ENCODE measurements at regions of chr3 and their contacts with region 1.

Region 1: DNA sequence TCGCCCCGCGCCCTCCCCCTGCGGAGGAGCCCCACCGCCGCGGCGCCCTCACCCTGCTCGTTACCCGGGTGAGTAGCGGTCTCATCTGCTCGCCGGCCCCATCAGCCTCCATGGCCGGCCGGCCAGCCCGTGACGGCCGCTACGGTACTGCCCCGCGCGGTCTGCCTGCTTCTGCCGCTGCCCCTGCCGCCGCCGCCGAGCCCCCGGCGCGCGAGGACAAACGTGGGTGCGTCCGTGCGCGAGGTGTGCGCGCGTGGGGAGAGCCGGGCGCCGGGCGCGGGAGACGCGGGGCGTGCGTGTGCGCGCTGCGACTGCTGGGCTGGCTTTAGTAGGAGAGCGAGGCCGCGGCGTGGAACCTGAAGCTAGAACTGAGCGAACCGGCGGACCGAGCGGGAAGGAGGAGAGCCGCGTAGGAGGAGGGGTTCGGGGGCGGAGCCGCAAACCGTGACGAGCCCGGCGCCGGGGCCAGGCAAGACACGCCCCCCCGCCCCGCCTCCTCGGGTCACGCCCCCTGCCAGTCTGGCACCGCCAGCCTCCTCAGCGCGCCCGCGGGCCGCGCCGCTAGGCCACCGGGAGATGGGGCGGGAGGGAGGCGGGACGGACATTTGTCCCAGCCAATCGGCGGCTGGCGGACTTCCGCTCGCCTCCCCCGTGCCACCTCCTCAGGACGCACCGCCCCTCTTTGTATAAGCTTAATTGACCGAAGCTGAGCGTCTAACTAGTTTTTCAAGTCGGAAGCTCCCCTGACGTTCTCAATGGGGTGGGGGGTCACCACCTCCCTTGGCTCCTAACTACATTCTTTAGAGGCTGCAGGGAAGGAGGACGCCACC is at the start of gene SLC4A7:
- DNase-seq: peak; percentile 95
- H3K4me3 ChIP-seq: peak within 1 kb of the TSS; percentile 81 to 94 (median 88)
- H3K4me3 Mint-ChIP-seq: peak within 1 kb of the TSS; percentile 99 to 100
- H3K27ac ChIP-seq: peak within 1 kb of the TSS; percentile 77 to 80
- H3K27ac Mint-ChIP-seq: peak within 1 kb of the TSS; percentile 79 to 96 (median 94)
- H3K4me1 ChIP-seq: peaks cover 17 to 21% of the 10 kb centered on the region in 2 donors
- H3K4me1 Mint-ChIP-seq: peaks cover 31% of the 10 kb centered on the region
- H3K27me3 ChIP-seq: no peaks in the 10 kb centered on the region
- H3K27me3 Mint-ChIP-seq: peaks cover 0 to 1% (median 0%) of the 10 kb centered on the region in 3 donors
- CTCF ChIP-seq: no peak
- polyA plus RNA-seq, gene SLC4A7: 5.4 to 7.6 (median 5.5) TPM

Region 2: GRCh38 chr3:27368831-27369607 is 115.2 kb before region 1 on chr3 and contains the start of gene NEK10:
- intact Hi-C with region 1: loop called (anchors 10 kb)
- DNase-seq: peak; percentile 83 to 88 (median 88)
- H3K4me3 ChIP-seq: peak within 1 kb of the TSS; percentile 34 to 84 (median 60)
- H3K4me3 Mint-ChIP-seq: peak within 1 kb of the TSS; percentile 85 to 95
- H3K27ac ChIP-seq: no peak within 1 kb of the TSS
- H3K27ac Mint-ChIP-seq: peak within 1 kb of the TSS in 4 of 7 donors; percentile 3 to 66 (median 14)
- H3K4me1 ChIP-seq: peaks cover 8 to 14% of the 10 kb centered on the region in 2 donors
- H3K4me1 Mint-ChIP-seq: peaks cover 14% of the 10 kb centered on the region
- H3K27me3 ChIP-seq: peaks cover 0 to 5% of the 10 kb centered on the region in 2 donors
- H3K27me3 Mint-ChIP-seq: peaks cover 7 to 15% (median 10%) of the 10 kb centered on the region in 3 donors
- CTCF ChIP-seq: no peak
- polyA plus RNA-seq, gene NEK10: not detected

Region 3: DNA sequence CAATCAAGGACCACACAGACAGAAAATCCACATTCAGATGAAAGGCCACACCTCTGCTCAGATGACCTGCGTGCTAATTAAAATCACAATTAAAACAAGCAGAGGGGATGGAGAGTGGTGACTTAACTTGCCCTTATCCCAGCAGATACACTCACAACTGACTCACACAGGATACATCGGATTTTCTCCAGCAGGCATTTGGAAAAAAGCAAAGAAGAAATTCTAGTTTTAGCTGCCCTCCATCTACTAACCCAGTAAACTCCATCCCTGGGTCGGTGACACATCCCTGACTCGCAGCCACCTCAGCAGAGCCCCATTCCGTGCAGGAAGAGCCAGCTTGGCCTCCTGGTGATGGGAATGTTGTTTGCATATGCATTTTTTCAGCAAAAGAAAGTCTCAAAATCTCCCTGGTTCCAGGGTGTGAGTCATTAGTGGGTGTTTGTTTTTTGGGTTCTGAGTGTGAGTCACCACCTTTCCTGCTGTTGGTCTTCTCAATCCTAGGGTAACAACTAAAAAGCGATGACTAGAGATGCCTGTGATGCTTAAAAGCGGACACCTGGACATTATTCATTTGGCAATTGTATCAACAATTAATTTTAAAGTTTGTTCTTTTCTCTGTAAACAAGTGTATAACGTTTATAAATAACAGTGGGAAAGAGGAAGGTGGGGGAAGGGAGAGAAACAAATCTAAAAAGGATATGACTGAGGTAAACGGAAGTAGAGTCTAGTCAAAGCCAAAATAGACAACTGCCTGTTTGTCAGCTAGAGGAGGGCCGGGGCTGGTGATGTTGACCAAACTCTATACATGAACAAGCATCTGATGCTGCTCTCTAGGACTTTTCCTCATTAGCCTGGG is 49.7 kb after region 1 on chr3:
- intact Hi-C with region 1: loop called in 1 of 2 experiments (anchors 5 kb)
- DNase-seq: peak; percentile 83 to 93 (median 88)
- H3K4me3 ChIP-seq: no peak overlapping the region
- H3K4me3 Mint-ChIP-seq: peak overlapping the region; percentile 49 to 81
- H3K27ac ChIP-seq: peak overlapping the region; percentile 80 to 90
- H3K27ac Mint-ChIP-seq: peak overlapping the region; percentile 94 to 98 (median 96)
- H3K4me1 ChIP-seq: peaks cover 27 to 33% of the 10 kb centered on the region in 2 donors
- H3K4me1 Mint-ChIP-seq: peaks cover 28% of the 10 kb centered on the region
- H3K27me3 ChIP-seq: no peaks in the 10 kb centered on the region
- H3K27me3 Mint-ChIP-seq: peaks cover 0 to 4% (median 2%) of the 10 kb centered on the region in 3 donors
- CTCF ChIP-seq: no peak

Region 4: DNA sequence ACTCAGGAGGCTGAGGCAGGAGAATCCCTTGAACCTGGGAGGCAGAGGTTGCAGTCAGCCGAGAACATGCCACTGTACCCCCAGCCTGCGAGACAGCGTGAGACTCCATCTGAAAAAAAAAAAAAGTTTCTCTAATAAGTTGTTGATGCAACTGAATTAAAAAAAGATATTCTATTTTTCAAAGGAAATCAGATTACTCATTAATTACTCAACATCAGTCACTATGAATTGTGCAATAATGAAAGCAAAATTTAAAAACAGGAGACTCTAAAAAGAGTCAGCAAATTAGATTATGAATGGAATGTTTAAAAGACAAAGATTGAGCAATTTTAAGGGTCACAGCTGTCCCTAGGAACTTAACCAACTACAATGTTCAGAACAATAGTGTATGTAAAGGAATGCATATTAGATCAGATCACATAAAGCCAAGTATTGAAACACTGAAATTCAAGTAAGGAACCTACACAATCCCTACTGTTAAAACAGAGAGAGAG is 60.2 kb after region 1 on chr3:
- intact Hi-C with region 1: loop called in 1 of 2 experiments (anchors 10 kb)
- DNase-seq: peak; percentile 60 to 88 (median 80)
- H3K4me3 ChIP-seq: peak overlapping the region in 1 of 3 experiments; percentile 7
- H3K4me3 Mint-ChIP-seq: peak overlapping the region; percentile 57 to 64
- H3K27ac ChIP-seq: peak overlapping the region; percentile 66 to 77
- H3K27ac Mint-ChIP-seq: peak overlapping the region; percentile 85 to 97 (median 93)
- H3K4me1 ChIP-seq: peaks cover 19 to 43% of the 10 kb centered on the region in 2 donors
- H3K4me1 Mint-ChIP-seq: peaks cover 37% of the 10 kb centered on the region
- H3K27me3 ChIP-seq: no peaks in the 10 kb centered on the region
- H3K27me3 Mint-ChIP-seq: peaks cover 0 to 3% (median 2%) of the 10 kb centered on the region in 3 donors
- CTCF ChIP-seq: no peak

Region 5: DNA sequence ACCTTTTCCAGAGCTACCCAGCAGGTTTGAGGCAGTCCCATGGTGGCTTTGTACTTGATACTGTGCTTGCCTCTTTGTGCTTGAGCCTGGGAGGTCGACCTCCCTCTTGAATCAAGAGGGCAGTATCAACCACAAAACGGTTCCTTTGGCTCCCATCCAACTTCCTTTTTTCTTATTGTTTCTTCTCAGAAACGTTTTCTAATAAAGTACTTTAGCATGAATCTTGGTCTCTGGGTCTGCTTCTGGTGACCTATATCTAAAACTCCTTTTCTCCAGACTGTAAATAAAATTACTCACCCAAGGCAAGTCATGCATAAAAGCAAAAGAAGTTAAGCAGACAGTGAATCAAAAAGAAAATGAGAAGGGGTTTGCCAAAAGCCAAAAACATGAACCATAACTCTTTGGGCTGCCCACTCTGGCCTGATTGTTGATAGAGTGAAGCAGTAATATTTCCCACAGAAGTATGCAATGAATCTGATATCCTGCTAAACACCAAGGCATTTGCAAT is 112.2 kb after region 1 on chr3:
- intact Hi-C with region 1: no loop called
- DNase-seq: peak in 2 of 3 donors; percentile 71 to 94
- H3K4me3 ChIP-seq: no peak overlapping the region
- H3K4me3 Mint-ChIP-seq: peak overlapping the region in 1 of 2 donors; percentile 53
- H3K27ac ChIP-seq: no peak overlapping the region
- H3K27ac Mint-ChIP-seq: peak overlapping the region in 3 of 7 donors; percentile 51 to 68 (median 66)
- H3K4me1 ChIP-seq: peaks cover 21 to 27% of the 10 kb centered on the region in 2 donors
- H3K4me1 Mint-ChIP-seq: peaks cover 15% of the 10 kb centered on the region
- H3K27me3 ChIP-seq: no peaks in the 10 kb centered on the region
- H3K27me3 Mint-ChIP-seq: peaks cover 0 to 2% (median 0%) of the 10 kb centered on the region in 3 donors
- CTCF ChIP-seq: no peak

Region 6: DNA sequence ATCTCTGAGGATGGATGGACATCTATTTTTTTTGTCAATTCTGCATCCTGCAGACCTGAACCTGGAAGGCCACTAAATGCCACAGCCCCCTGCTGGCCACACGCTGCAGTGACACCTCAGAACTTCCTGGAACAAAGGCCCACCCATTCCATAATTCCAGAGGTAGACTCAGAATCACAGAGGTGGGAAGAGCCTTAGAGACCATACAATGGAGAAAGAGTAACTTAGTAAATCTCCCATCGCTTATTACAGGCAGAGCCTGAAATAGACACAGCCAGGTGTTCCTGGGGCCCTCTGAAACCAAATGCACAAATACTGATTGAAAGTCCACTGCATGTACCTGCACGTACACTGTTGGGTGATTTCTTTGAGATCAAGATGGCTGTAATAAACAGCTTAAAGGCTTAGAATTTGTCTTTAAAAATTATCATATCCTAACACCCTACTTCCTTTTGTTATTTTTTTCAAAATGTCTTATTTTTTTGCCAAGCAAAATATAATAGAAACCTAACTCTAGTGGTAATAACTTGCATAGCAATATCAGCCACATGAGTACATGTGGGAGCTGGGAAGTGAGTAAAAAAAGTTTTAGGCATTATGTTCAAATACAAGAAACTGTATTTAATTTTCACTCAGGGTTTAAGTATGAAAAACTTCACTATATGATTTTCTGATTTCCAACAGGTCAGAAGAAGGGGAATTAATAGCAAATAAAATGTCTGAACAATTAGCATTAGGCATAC is 175.2 kb after region 1 on chr3:
- intact Hi-C with region 1: loop called in 1 of 2 experiments (anchors 10 kb)
- DNase-seq: peak; percentile 25 to 60 (median 52)
- H3K4me3 ChIP-seq: no peak overlapping the region
- H3K4me3 Mint-ChIP-seq: no peak overlapping the region
- H3K27ac ChIP-seq: no peak overlapping the region
- H3K27ac Mint-ChIP-seq: peak overlapping the region in 1 of 7 donors; percentile 69
- H3K4me1 ChIP-seq: no peaks in the 10 kb centered on the region
- H3K4me1 Mint-ChIP-seq: peaks cover 4% of the 10 kb centered on the region
- H3K27me3 ChIP-seq: no peaks in the 10 kb centered on the region
- H3K27me3 Mint-ChIP-seq: peaks cover 0 to 4% (median 0%) of the 10 kb centered on the region in 3 donors
- CTCF ChIP-seq: peak; percentile 99

Region 7: GRCh38 chr3:28348629-28349483 is 864.6 kb after region 1 on chr3 and contains the starts of genes AZI2 and ZCWPW2:
- intact Hi-C with region 1: loop called in 1 of 2 experiments (anchors 5 kb)
- DNase-seq: peak; percentile 88 to 93 (median 92)
- H3K4me3 ChIP-seq: peak within 1 kb of the TSS; percentile 86 to 99 (median 94)
- H3K4me3 Mint-ChIP-seq: peak within 1 kb of the TSS; percentile 89 to 94
- H3K27ac ChIP-seq: peak within 1 kb of the TSS; percentile 100
- H3K27ac Mint-ChIP-seq: peak within 1 kb of the TSS; percentile 98 to 100 (median 100)
- H3K4me1 ChIP-seq: peaks cover 29 to 51% of the 10 kb centered on the region in 2 donors
- H3K4me1 Mint-ChIP-seq: peaks cover 36% of the 10 kb centered on the region
- H3K27me3 ChIP-seq: no peaks in the 10 kb centered on the region
- H3K27me3 Mint-ChIP-seq: peaks cover 0 to 2% (median 1%) of the 10 kb centered on the region in 3 donors
- CTCF ChIP-seq: no peak
- polyA plus RNA-seq, gene AZI2: 57.4 to 134 (median 99.3) TPM
- polyA plus RNA-seq, gene ZCWPW2: 0.07 to 0.41 (median 0.35) TPM